ENCODE measurements at regions of chr12 and their contacts with region 1.

Region 1: GRCh38 chr12:11836282-11837151 is 187.0 kb downstream of the ETV6 start:
- DNase-seq: peak; percentile 12
- H3K4me3 Mint-ChIP-seq: no peak overlapping the region
- H3K27ac Mint-ChIP-seq: peak overlapping the region; percentile 87
- H3K4me1 Mint-ChIP-seq: peaks cover 65% of the 10 kb centered on the region
- H3K27me3 Mint-ChIP-seq: no peaks in the 10 kb centered on the region

Region 2: GRCh38 chr12:11581179-11581755 is 255.2 kb before region 1 on chr12:
- intact Hi-C with region 1: loop called (anchors 5 kb)
- DNase-seq: peak; percentile 32
- H3K4me3 Mint-ChIP-seq: no peak overlapping the region
- H3K27ac Mint-ChIP-seq: no peak overlapping the region
- H3K4me1 Mint-ChIP-seq: peaks cover 14% of the 10 kb centered on the region
- H3K27me3 Mint-ChIP-seq: peaks cover 38% of the 10 kb centered on the region

Region 3: GRCh38 chr12:11633968-11634367 is 202.5 kb before region 1 on chr12:
- intact Hi-C with region 1: no loop called
- DNase-seq: no peak
- H3K4me3 Mint-ChIP-seq: no peak overlapping the region
- H3K27ac Mint-ChIP-seq: no peak overlapping the region
- H3K4me1 Mint-ChIP-seq: no peaks in the 10 kb centered on the region
- H3K27me3 Mint-ChIP-seq: peaks cover 2% of the 10 kb centered on the region

Region 4: GRCh38 chr12:11730299-11731041 is 106.0 kb before region 1 on chr12:
- intact Hi-C with region 1: loop called (anchors 5 kb)
- DNase-seq: no peak
- H3K4me3 Mint-ChIP-seq: peak overlapping the region; percentile 28
- H3K27ac Mint-ChIP-seq: peak overlapping the region; percentile 78
- H3K4me1 Mint-ChIP-seq: peaks cover 75% of the 10 kb centered on the region
- H3K27me3 Mint-ChIP-seq: no peaks in the 10 kb centered on the region

Region 5: DNA sequence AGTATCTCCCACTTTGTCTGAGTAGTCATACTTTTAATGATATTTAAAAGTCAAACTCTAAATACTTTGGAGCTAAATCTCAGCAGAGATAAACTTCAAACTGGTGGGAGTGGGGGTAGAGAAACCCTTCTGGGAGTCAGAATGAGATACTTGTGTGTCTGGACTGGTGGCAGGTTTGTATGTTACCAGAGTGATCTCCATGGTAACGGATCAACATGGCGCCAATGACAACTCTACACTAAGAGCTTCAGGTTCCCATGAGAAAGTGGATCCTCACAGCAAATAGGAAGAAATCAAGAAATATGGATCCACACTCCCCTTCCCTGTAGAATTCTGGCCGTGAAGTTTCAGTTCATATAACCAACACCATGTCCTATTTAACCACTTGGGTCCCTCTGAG is 65.2 kb before region 1 on chr12:
- intact Hi-C with region 1: loop called (anchors 1 kb)
- DNase-seq: no peak
- H3K4me3 Mint-ChIP-seq: no peak overlapping the region
- H3K27ac Mint-ChIP-seq: peak overlapping the region; percentile 91
- H3K4me1 Mint-ChIP-seq: peaks cover 75% of the 10 kb centered on the region
- H3K27me3 Mint-ChIP-seq: no peaks in the 10 kb centered on the region

Region 6: DNA sequence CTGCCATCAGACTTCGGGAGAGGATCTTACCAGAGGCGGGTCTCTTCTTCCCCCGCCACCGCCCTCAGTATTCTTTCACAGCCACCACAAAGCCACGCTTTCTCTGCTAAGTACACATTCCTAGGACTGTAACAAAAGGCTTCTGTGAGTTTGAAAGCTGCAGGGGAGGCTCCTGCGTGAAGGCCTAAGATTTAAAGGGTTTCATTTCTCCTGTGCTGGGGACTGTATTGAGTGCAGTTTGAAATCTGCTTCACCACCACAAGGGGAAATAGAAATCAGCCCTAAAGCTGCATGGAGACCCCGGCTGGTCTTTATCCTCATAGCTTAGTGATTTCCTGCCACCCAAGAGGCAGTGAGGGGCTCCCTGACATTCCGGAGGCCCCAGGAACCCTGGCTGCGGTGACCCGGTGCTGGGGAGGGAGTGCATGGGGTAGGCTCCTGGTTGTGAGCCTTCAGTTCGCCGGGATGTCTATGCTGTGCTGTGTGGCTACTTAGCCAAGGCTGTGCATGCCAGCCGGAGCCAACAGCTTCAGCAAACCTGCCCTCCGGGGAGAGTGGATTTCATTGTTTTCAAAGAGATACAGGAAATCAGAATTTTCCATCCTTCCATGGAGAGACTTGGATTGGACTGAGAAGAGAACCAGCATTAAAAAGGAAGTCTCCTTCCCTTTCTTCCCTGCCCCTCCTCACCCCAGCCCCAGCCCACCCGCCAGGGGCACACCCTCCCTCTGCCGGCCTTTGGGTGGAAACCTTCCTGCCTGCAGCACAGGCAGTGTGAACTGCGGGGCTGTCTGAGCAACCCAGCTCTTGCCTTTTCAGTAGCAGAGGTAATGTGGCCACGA is 23.7 kb before region 1 on chr12:
- intact Hi-C with region 1: loop called (anchors 2 kb)
- DNase-seq: no peak
- H3K4me3 Mint-ChIP-seq: no peak overlapping the region
- H3K27ac Mint-ChIP-seq: peak overlapping the region; percentile 35
- H3K4me1 Mint-ChIP-seq: peaks cover 28% of the 10 kb centered on the region
- H3K27me3 Mint-ChIP-seq: no peaks in the 10 kb centered on the region

Region 7: GRCh38 chr12:11958221-11959091 is 121.9 kb after region 1 on chr12:
- intact Hi-C with region 1: loop called (anchors 5 kb)
- DNase-seq: peak; percentile 43
- H3K4me3 Mint-ChIP-seq: peak overlapping the region; percentile 13
- H3K27ac Mint-ChIP-seq: peak overlapping the region; percentile 93
- H3K4me1 Mint-ChIP-seq: peaks cover 51% of the 10 kb centered on the region
- H3K27me3 Mint-ChIP-seq: peaks cover 10% of the 10 kb centered on the region

Region 8: GRCh38 chr12:12032851-12033588 is 196.5 kb after region 1 on chr12:
- intact Hi-C with region 1: loop called (anchors 2 kb)
- DNase-seq: peak; percentile 49
- H3K4me3 Mint-ChIP-seq: peak overlapping the region; percentile 65
- H3K27ac Mint-ChIP-seq: peak overlapping the region; percentile 79
- H3K4me1 Mint-ChIP-seq: peaks cover 31% of the 10 kb centered on the region
- H3K27me3 Mint-ChIP-seq: peaks cover 8% of the 10 kb centered on the region

Measured in activated T-helper 2 cell treated with anti-CD3 and anti-CD28 coated beads, Interferon-gamma antibody, Interleukin-2, Interleukin-4, amounts not matched to agents 10 μg/mL and 5 μg/mL and 100 μg/mL, durations not matched to agents 14 hours and 24 hours and 36 hours (primary cell).